Left cardiac atrium (tissue), 4 donors: ENCODE measurements at regions of chr13 and their contacts with region 1.

Region 1: DNA sequence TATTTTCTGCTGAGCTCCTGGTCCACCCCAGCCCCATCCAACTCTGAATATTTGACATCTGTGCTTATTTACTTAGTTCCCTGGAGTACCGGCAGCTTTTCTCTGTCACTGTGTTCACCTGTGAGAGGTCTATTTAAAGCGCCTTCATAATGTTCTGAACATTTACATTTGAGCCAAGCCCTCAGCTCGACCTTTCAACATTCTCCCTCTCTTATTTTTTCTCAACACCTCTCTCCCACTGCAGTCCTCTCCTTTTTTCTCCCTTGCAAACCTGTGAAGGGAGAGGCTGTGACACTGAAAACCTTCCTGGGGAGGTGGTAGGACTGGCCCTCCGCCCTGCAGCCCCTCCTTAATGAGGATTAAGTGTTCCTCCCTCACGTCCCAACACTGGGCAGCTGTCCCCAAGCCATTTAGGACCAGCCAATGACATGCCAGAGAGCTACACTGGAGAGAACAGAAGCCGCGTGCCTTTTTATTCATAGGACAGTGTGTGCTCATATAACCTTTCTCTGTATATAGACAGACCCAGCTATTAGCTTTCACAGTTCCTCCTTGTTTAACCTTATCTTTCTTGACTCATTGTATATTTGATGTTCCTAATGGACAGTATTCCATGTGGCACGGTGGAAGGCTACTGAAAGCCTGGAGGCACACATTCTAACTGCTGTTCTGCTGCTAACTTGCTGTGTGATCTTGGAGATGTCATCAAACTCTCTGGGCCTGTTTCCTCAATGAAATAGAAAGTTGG is 134.8 kb downstream of the NUFIP1 start:
- DNase-seq: peak; percentile 69
- ATAC-seq: peak; percentile 97 to 98

Region 2: DNA sequence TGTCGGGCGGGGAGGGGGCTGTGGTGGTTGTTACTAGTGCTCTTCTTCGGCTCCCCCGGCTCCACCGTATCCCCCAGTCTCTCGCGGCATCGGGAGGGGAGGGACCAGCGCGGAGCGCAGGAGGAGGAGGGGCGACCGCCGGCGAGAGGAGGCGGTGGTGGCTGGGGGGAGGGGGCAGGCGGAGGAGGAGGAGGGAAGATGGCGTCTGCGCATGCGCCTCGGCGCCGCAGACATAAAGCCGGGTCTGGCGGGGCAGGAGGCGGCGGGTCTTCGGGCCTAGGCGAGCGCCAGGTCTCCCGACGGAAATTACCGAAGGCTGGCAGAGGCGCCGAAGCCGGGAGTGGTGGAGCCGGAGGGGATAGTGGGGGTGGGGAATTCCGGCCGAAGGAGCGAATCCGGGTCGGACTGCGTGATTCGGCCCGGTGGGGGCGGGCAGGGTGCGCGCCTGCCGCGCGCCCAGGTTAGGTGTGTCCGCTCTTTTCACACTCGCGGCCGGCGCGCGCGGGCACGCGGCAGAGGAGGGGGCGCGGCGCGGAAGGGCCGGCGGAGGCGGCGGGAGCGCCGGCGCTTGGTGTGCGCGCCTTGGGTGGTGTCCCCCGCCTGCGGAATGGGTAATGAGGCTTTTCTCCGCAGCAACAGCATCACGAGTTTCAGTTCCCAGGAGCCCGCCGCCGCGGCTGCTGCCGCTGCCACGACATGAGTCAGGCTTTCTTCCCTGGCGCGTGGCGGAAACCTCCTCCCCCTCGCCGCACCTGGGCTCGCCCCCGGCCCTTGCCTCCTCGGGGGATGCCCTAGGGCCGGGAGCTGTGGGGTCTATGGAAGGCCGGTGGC is 277.0 kb before region 1 on chr13:
- intact Hi-C with region 1: loop called in 1 of 2 experiments (anchors 5 kb)
- DNase-seq: peak; percentile 98
- ATAC-seq: peak; percentile 90 to 92

Region 3: GRCh38 chr13:44746690-44747089 is 107.8 kb before region 1 on chr13:
- intact Hi-C with region 1: loop called in 1 of 2 experiments (anchors 5 kb)
- DNase-seq: no peak
- ATAC-seq: no peak

Region 4: GRCh38 chr13:45021250-45021649 is 166.8 kb after region 1 on chr13:
- intact Hi-C with region 1: no loop called
- DNase-seq: no peak
- ATAC-seq: no peak